ENCODE measurements at regions of chr9 and their contacts with region 1.

Region 1: GRCh38 chr9:121278535-121279261 is 10.7 kb downstream of the GSN start:
- DNase-seq: no peak
- ATAC-seq: peak; percentile 79
- H3K4me3 ChIP-seq: peak overlapping the region; percentile 4; a peak in 1 of 4 replicates
- H3K27ac ChIP-seq: peak overlapping the region; percentile 99
- H3K4me1 ChIP-seq: peaks cover 90% of the 10 kb centered on the region
- H3K27me3 ChIP-seq: no peaks in the 10 kb centered on the region
- CTCF ChIP-seq: peak; percentile 85

Region 2: DNA sequence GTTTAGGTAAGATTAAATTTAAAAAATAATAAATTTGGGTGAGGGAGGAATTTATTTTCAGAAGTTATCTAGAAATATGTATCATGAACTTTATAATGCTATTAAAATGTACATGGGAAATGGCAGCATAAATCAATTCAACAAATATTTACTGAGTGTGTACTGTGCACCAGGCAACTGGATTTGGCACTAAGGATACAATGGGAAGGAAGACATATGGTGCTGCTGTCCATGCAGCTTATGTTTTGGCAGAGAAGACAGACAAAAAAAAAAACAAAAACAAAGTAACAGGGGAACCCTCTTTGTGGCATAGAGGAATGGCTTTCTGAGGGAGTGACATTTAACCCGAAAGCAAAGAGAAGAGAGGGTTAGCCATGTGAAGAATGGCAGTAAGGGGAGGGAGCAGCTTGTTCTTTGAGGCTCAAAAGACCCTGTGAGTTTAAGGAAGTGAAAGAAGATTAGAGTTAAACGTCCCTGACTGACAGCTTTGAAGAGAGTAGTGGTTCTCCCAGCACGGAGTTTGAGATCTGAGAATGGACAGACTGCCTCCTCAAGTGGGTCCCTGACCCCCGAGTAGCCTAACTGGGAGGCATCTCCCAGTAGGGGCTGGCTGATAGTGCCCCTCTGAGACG is 180.0 kb before region 1 on chr9:
- CTCF ChIA-PET with region 1: no interaction called
- POLR2A ChIA-PET with region 1: no interaction called
- in situ Hi-C with region 1: no loop called
- intact Hi-C with region 1: no loop called
- DNase-seq: no peak
- ATAC-seq: no peak
- H3K4me3 ChIP-seq: no peak overlapping the region
- H3K27ac ChIP-seq: no peak overlapping the region
- H3K4me1 ChIP-seq: no peaks in the 10 kb centered on the region
- H3K27me3 ChIP-seq: no peaks in the 10 kb centered on the region
- CTCF ChIP-seq: no peak

Region 3: GRCh38 chr9:121213136-121213806 is 65.4 kb before region 1 on chr9:
- CTCF ChIA-PET with region 1: no interaction called
- POLR2A ChIA-PET with region 1: no interaction called
- in situ Hi-C with region 1: no loop called
- intact Hi-C with region 1: loop called (anchors 5 kb)
- DNase-seq: peak; percentile 64
- ATAC-seq: peak; percentile 99
- H3K4me3 ChIP-seq: no peak overlapping the region
- H3K27ac ChIP-seq: peak overlapping the region; percentile 74
- H3K4me1 ChIP-seq: no peaks in the 10 kb centered on the region; the same call in 1 of the 2 replicates
- H3K27me3 ChIP-seq: no peaks in the 10 kb centered on the region
- CTCF ChIP-seq: peak; percentile 93

Measured in Panc1 (cell line).